Calu3 (cell line): ENCODE measurements at regions of chr15 and their contacts with region 1.

Region 1: DNA sequence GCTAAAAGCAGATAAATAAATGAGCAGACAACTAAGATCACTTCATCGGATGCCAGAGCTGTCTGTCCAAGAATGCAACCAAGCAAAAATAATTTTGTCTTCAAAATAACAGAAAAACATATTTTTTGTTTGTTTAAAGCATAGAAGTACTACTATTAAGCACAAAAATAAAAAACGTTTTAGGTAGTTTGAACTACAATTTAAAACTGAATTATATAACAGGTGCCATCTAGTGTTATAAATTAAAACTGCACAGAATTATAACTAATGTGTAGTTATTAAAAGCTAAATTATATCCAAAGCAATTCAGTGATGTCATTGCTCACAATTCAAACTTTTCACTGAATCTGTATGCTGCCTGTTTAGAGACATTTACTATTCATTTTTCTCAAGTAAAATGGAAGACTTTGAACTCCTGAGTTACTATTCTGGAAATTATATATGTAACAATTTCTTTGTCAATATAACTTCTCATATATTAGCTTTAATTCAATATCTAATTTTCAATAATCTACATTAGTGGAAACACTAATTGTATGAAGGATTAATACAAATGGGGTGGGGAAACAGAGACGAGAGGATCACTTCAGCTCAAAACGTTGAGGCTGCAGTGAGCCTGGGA is 29.5 kb downstream of the LINS1 start:
- DNase-seq: no peak
- H3K4me3 Mint-ChIP-seq: no peak overlapping the region
- H3K27ac Mint-ChIP-seq: no peak overlapping the region
- H3K4me1 Mint-ChIP-seq: no peaks in the 10 kb centered on the region
- H3K27me3 Mint-ChIP-seq: no peaks in the 10 kb centered on the region
- CTCF ChIP-seq: peak; percentile 21

Region 2: DNA sequence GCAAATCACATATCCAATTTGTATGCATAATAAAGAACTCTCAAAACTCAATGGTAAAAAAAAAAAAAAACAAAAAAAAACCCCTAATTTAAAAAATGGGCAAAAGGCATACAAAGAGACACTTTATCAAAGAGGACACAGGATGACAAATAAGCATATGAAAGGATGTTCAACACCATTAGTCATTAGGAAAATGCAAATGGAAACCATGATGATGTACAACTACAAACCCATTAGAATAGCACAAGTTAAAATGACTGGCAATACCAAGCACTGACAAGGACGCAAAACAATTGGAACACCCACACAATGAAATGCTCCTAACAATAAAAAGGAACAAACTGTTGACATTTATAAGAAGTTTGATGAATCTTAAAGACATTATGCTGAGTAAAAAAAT is 167.3 kb before region 1 on chr15:
- CTCF ChIA-PET with region 1: no interaction called
- intact Hi-C with region 1: loop called (anchors 5 kb)
- DNase-seq: no peak
- H3K4me3 Mint-ChIP-seq: no peak overlapping the region
- H3K27ac Mint-ChIP-seq: no peak overlapping the region
- H3K4me1 Mint-ChIP-seq: no peaks in the 10 kb centered on the region
- H3K27me3 Mint-ChIP-seq: no peaks in the 10 kb centered on the region
- CTCF ChIP-seq: no peak